Left ventricle myocardium inferior (tissue), 1 donor: ENCODE measurements at regions of chr1 and their contacts with region 1.

Region 1: DNA sequence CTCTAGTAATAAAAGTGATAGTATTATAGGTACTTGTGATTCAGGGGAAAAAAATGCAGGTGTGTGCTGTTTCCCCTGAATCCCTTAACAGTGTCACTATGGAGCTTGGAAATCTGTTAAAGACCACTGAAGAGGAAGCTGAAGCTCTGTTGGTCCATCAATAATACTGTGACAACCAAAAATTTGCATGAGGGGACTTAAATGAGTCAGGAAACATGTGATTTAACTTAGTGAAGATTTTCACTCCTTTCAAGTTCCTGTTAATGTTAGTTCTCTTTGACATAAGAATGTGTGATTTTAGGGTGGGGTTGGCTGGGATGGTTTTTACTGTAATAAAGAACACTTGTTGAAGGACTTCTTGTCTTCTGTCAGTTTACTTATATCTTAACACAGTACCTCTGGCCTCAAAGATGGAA is 32.0 kb downstream of the VANGL2 start:
- DNase-seq: no peak
- H3K4me3 ChIP-seq: no peak overlapping the region
- H3K27ac ChIP-seq: no peak overlapping the region
- H3K4me1 ChIP-seq: peaks cover 19% of the 10 kb centered on the region
- H3K27me3 ChIP-seq: no peaks in the 10 kb centered on the region
- CTCF ChIP-seq: no peak

Region 2: DNA sequence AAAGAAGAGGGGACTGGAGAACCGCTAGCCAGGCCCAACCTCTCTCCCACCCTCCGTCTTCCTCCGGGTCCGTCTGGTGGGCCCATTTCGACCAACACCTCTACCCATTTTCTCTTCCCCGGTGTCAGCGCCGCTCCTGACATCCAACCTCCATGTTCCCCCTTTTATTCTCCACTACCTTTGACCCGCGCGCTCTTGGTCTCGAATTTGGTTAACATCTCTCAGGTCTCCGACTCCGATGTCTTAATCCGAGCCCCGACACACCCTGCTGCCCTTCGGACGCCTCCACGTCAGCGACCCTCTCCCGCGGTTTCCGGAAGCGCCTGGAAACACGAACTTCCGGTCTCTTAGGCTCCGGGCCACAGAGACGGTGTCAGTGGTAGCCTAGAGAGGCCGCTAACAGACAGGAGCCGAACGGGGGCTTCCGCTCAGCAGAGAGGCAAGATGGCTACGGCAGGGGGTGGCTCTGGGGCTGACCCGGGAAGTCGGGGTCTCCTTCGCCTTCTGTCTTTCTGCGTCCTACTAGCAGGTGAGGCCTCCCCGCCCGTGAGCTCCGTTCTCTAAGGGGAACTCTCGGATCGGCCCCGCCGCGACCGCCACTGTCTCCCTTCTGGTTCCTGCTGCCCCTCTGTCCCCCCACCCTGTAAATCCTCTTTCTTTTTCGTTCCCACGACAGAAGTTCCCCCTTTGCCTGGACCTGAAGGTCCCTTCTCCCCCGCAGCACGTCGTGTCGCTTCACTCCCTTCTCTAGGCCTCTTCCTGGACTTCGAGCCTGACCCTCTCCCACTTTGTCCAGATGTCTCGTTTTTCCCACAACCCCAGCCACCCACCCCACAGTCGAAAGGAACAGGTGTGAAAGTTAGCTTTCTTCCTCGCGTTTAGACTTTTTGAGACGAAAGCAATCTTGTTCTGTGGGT is 89.2 kb before region 1 on chr1 and contains the starts of genes COPA and NCSTN:
- intact Hi-C with region 1: no loop called
- DNase-seq: peak; percentile 91
- H3K4me3 ChIP-seq: peak within 1 kb of the TSS; percentile 96
- H3K27ac ChIP-seq: peak within 1 kb of the TSS; percentile 91
- H3K4me1 ChIP-seq: peaks cover 71% of the 10 kb centered on the region
- H3K27me3 ChIP-seq: no peaks in the 10 kb centered on the region
- CTCF ChIP-seq: peak; percentile 12
- total RNA-seq, gene COPA: 90.4 TPM
- total RNA-seq, gene NCSTN: 53.6 TPM

Region 3: GRCh38 chr1:160607011-160607671 is 174.8 kb after region 1 on chr1:
- intact Hi-C with region 1: loop called (anchors 5 kb)
- DNase-seq: no peak
- H3K4me3 ChIP-seq: no peak overlapping the region
- H3K27ac ChIP-seq: no peak overlapping the region
- H3K4me1 ChIP-seq: no peaks in the 10 kb centered on the region
- H3K27me3 ChIP-seq: peaks cover 46% of the 10 kb centered on the region
- CTCF ChIP-seq: peak; percentile 73